ENCODE measurements at regions of chr19 and their contacts with region 1.

Region 1: GRCh38 chr19:40750059-40750873 is at the start of gene ACTMAP:
- DNase-seq: peak; percentile 96
- H3K4me3 ChIP-seq: peak within 1 kb of the TSS; percentile 74 to 75
- H3K27ac ChIP-seq: peak within 1 kb of the TSS; percentile 81 to 88
- H3K4me1 ChIP-seq: peaks cover 14 to 25% of the 10 kb centered on the region in 2 experiments; a peak in 2 of 4 replicates
- H3K27me3 ChIP-seq: no peaks in the 10 kb centered on the region
- CTCF ChIP-seq: no peak
- EP300 ChIP-seq: no peak
- RAD21 ChIP-seq: no peak
- polyA plus RNA-seq, gene ACTMAP: 4.5 and 6.4 TPM in 2 replicates

Region 2: DNA sequence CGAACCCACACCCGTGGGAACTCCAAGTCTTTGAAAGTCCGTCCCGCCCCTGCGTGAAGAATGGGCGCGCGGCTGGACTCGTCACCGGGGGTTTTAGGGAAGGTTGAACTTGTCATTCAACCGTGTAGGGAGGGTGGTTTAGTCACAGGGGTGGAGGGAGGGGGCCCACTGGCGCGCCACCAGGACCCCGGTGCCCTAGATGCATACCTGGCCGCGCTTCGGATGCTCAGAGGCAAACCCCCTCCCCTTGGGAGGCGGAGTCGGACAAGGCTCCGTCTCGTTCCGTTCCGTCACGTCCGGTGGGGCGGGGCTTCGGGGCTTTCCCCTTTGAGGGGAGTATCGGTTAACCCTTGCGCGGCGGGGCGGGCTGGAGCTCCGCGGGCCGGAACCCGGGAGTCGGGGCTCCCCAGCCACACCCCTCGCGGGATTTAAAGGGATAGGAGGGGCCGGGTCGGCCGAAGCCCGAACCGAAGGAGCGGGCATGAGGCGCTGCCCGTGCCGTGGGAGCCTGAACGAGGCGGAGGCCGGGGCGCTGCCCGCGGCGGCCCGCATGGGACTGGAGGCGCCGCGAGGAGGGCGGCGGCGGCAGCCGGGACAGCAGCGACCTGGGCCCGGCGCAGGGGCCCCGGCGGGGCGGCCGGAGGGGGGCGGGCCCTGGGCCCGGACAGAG is 33.5 kb before region 1 on chr19 and contains the starts of genes COQ8B and ITPKC:
- CTCF ChIA-PET with region 1: no interaction called
- POLR2A ChIA-PET with region 1: interaction called, 15 read pairs
- DNase-seq: peak; percentile 98
- H3K4me3 ChIP-seq: peak within 1 kb of the TSS; percentile 70 to 80
- H3K27ac ChIP-seq: peak within 1 kb of the TSS; percentile 96 to 100
- H3K4me1 ChIP-seq: peaks cover 8 to 35% of the 10 kb centered on the region in 2 experiments; a peak in 1 of 4 replicates
- H3K27me3 ChIP-seq: no peaks in the 10 kb centered on the region
- CTCF ChIP-seq: no peak
- EP300 ChIP-seq: peak in 1 of 2 experiments; percentile 14; a peak in 1 of 4 replicates
- RAD21 ChIP-seq: no peak
- polyA plus RNA-seq, gene COQ8B: 41.9 and 43.8 TPM in 2 replicates
- polyA plus RNA-seq, gene ITPKC: 6.3 and 7.4 TPM in 2 replicates

Region 3: GRCh38 chr19:40777937-40778705 is 27.9 kb after region 1 on chr19 and contains the start of gene RAB4B:
- CTCF ChIA-PET with region 1: no interaction called
- POLR2A ChIA-PET with region 1: interaction called, 20 read pairs
- DNase-seq: peak; percentile 93
- H3K4me3 ChIP-seq: peak within 1 kb of the TSS; percentile 61 to 67
- H3K27ac ChIP-seq: peak within 1 kb of the TSS; percentile 97 to 99
- H3K4me1 ChIP-seq: peaks cover 6 to 9% of the 10 kb centered on the region in 2 experiments; a peak in 2 of 4 replicates
- H3K27me3 ChIP-seq: no peaks in the 10 kb centered on the region
- CTCF ChIP-seq: no peak
- EP300 ChIP-seq: no peak
- RAD21 ChIP-seq: no peak
- polyA plus RNA-seq, gene RAB4B: 49.1 and 53.2 TPM in 2 replicates

Region 4: DNA sequence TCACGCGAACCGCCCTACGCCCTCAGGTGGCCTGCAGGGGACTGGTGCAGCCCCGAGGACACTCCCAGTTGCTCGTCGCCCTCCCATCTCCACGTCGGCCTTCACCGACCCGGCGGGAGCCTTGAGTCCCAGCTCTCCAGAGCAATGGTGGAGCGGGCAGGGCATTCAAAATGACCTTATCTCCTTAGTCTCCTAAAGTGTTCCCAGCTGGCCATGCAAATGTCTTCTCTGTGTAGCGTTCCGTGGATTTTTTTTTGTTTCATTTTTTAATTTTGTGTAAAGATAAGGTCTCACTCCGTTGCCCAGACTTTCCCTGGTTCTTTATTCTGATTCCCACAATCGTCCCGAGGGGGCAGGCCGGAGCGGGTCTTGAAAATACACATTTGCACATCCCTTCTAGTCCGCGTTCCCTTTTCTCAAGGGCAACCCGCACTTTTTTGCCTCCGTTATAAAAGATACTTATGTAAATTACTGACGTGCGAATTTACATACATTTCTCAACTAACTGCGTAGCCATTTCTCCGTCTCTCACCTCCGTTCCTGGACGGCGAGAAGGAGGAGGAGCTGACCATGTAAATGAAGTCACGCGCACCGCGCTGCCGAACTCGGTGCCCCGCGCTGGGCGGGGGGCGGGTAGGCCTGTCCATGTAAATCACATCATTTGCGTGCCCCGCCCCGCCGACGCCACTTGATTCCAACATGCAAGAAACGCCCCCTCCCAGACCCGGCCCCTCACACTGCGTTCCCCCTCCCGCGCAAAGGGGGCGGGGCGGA is 48.1 kb after region 1 on chr19:
- CTCF ChIA-PET with region 1: no interaction called
- POLR2A ChIA-PET with region 1: interaction called, 11 read pairs
- DNase-seq: peak; percentile 77
- H3K4me3 ChIP-seq: peak overlapping the region; percentile 50 to 65
- H3K27ac ChIP-seq: peak overlapping the region; percentile 84 to 89
- H3K4me1 ChIP-seq: peaks cover 31 to 37% of the 10 kb centered on the region in 2 experiments; a peak in 2 of 4 replicates
- H3K27me3 ChIP-seq: no peaks in the 10 kb centered on the region
- CTCF ChIP-seq: peak; percentile 65
- EP300 ChIP-seq: no peak
- RAD21 ChIP-seq: peak; percentile 14; the same call in 1 of the 2 replicates

Region 5: GRCh38 chr19:40806488-40807468 is 56.5 kb after region 1 on chr19:
- CTCF ChIA-PET with region 1: interaction called, 18 read pairs
- POLR2A ChIA-PET with region 1: no interaction called
- DNase-seq: peak; percentile 97
- H3K4me3 ChIP-seq: peak overlapping the region; percentile 21 to 45; a peak in 3 of 4 replicates
- H3K27ac ChIP-seq: peak overlapping the region; percentile 72 to 78
- H3K4me1 ChIP-seq: peaks cover 27 to 61% of the 10 kb centered on the region in 2 experiments; a peak in 3 of 4 replicates
- H3K27me3 ChIP-seq: no peaks in the 10 kb centered on the region
- CTCF ChIP-seq: peak; percentile 97
- EP300 ChIP-seq: no peak
- RAD21 ChIP-seq: peak; percentile 60

Measured in SK-N-SH (cell line).